GM13976 (cell line): ENCODE measurements at regions of chr7 and their contacts with region 1.

Region 1: DNA sequence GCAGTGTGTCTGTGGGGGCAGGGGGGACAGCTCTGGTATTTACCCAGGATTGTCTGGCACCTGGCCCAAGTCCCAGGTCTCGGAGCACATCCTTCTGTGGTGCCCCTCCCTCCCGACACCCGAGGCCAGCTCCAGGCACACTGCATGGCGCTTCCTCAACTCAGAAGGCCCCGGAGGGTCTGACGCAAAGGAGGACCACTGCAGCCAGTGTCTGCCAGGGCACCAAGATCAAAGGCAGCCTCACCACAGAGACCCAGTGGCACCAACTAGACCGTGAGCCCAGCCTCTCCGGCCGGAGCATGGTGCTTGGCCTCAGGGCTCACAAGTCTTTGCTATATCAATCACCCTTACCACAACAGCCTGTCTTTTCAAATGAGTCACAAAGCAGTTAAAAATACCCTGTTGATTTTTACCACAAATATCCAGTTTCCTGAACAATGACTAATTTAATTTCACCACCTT is 99.3 kb upstream of the DDC start:
- DNase-seq: peak; percentile 60
- CTCF ChIP-seq: no peak

Region 2: GRCh38 chr7:49894543-49894942 is 769.9 kb before region 1 on chr7:
- in situ Hi-C with region 1: no loop called
- DNase-seq: no peak
- CTCF ChIP-seq: no peak

Region 3: GRCh38 chr7:50119815-50120637 is 544.5 kb before region 1 on chr7:
- in situ Hi-C with region 1: loop called (anchors 25 kb)
- DNase-seq: no peak
- CTCF ChIP-seq: peak; percentile 58

Region 4: GRCh38 chr7:51278797-51279196 is 614.3 kb after region 1 on chr7:
- in situ Hi-C with region 1: no loop called
- DNase-seq: no peak
- CTCF ChIP-seq: no peak